H1 (cell line): ENCODE measurements at regions of chr1 and their contacts with region 1.

Region 1: DNA sequence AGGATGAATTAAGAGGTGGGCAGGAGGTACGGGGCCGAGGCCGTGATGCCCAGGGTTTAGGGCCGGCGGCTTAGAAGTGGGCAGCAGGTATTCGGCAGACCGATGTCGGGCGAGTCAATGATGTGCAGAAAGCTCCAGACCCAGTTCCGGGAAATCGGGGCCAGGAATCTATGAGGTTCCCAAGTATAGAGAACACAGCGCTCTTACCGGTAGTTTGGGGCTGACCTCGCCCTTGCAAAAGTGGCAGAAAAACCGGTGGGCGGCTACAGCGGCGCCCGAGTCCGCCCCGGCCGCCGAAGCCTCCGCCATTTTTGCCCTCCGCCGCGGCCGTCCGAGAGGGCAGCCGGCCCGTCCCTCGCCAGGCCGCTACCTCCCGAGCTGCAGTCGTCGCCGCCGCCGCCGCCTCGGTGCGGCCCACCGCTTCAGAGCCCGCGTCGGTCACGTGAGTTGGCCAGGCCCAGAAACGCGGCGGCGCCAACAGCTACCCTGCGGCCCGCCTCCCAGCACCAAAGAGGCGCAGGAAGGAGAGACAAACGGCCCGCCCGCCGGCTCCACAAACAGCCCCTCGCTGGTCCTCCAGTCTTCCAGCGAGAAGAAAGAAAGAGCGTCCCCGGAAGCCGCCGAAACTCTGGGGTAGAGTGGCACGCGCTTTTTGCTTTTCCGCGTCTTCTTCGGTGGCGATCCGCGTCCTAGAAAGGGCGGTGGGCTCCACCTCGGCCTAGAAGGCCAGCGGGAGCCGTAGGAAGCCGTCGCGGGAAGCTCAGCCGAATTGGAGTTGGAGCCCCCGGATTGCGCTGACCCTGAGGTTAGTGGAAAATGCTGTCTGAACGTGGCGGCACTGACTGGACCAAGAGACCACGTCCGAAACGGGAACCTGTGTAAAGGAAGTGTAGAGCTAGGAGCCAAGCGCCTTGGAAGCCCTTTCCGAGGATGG is at the starts of genes POLR3C and RNF115:
- DNase-seq: peak; percentile 62 to 88
- H3K4me3 ChIP-seq: peak within 1 kb of the TSS; percentile 75 to 100 (median 98)
- H3K27ac ChIP-seq: peak within 1 kb of the TSS; percentile 91
- H3K4me1 ChIP-seq: peaks cover 0 to 4% (median 0%) of the 10 kb centered on the region in 4 experiments; a peak in 1 of 7 replicates
- H3K27me3 ChIP-seq: no peaks in the 10 kb centered on the region
- CTCF ChIP-seq: no peak
- EP300 ChIP-seq: peak in 1 of 2 experiments; percentile 33; a peak in 1 of 3 replicates
- POLR2A ChIP-seq: peak in 1 of 2 experiments; percentile 69; a peak in 2 of 3 replicates
- RAD21 ChIP-seq: no peak
- total RNA-seq, gene POLR3C: 26.2 and 26.8 TPM in 2 replicates
- total RNA-seq, gene RNF115: 10.2 and 10.8 TPM in 2 replicates

Region 2: GRCh38 chr1:145837656-145838055 is 13.8 kb after region 1 on chr1:
- CTCF ChIA-PET with region 1: interaction called, 109 read pairs
- POLR2A ChIA-PET with region 1: interaction called, 16 read pairs
- DNase-seq: no peak
- H3K4me3 ChIP-seq: no peak overlapping the region
- H3K27ac ChIP-seq: no peak overlapping the region
- H3K4me1 ChIP-seq: no peaks in the 10 kb centered on the region
- H3K27me3 ChIP-seq: no peaks in the 10 kb centered on the region
- CTCF ChIP-seq: no peak
- EP300 ChIP-seq: no peak
- POLR2A ChIP-seq: no peak
- RAD21 ChIP-seq: no peak